ENCODE measurements at regions of chr10 and their contacts with region 1.

Region 1: DNA sequence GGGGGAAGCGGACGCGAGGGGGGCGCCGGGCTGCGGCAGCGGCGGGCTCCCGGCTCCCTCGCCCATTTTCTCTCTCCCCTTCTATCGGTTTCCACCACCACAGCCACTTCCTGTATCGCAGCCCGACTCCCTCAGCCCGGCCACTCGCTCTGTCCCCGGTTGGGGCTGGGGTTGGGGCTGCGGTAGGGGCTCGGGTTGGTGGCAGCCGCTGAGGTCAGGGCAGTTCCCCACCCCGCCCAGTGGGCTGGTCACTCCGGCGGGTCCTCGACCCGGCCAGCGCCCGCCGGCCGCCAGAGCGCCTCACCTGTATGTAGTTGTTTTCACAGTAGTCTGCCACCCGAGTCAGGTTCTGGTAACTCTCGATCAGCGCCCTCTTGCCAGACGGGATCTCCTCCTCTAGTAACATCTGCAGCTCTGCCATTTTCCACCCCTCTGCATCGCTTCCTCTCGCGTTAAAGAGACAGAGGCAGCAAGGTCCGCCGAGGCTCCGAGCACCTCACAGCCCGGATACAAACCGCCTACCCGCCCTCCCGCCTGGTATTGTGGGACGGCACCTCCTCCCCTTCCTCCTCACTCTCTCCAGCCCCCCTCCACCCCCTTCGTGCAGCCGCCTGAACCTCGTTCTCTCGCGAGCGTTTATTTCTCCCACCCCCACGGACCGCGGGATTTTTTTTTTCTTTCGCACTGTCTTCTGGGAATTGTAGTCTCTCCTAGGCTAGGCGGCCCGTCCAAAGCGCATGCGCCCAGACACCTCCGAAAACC is at the start of gene ABI1:
- DNase-seq: peak; percentile 99
- ATAC-seq: peak; percentile 95
- H3K4me3 Mint-ChIP-seq: peak within 1 kb of the TSS; percentile 98
- H3K27ac Mint-ChIP-seq: peak within 1 kb of the TSS; percentile 98
- H3K4me1 Mint-ChIP-seq: peaks cover 30% of the 10 kb centered on the region
- H3K27me3 Mint-ChIP-seq: no peaks in the 10 kb centered on the region
- total RNA-seq, gene ABI1: 44.2 to 56.6 TPM

Region 2: GRCh38 chr10:26437637-26438461 is 422.8 kb before region 1 on chr10 and contains the start of gene APBB1IP:
- CTCF ChIA-PET with region 1: interaction called, 4 read pairs
- POLR2A ChIA-PET with region 1: interaction called, 3 read pairs
- intact Hi-C with region 1: loop called in 1 of 2 experiments (anchors 2 kb)
- DNase-seq: peak; percentile 73
- ATAC-seq: peak; percentile 56
- H3K4me3 Mint-ChIP-seq: peak within 1 kb of the TSS; percentile 89
- H3K27ac Mint-ChIP-seq: peak within 1 kb of the TSS; percentile 97
- H3K4me1 Mint-ChIP-seq: peaks cover 49% of the 10 kb centered on the region
- H3K27me3 Mint-ChIP-seq: no peaks in the 10 kb centered on the region
- total RNA-seq, gene APBB1IP: 53.3 to 66.4 TPM

Region 3: GRCh38 chr10:26697163-26697921 is 163.3 kb before region 1 on chr10 and contains the start of gene PDSS1:
- CTCF ChIA-PET with region 1: interaction called, 3 read pairs
- POLR2A ChIA-PET with region 1: no interaction called
- intact Hi-C with region 1: loop called (anchors 1 kb)
- DNase-seq: peak; percentile 79
- ATAC-seq: peak; percentile 78
- H3K4me3 Mint-ChIP-seq: peak within 1 kb of the TSS; percentile 91
- H3K27ac Mint-ChIP-seq: peak within 1 kb of the TSS; percentile 95
- H3K4me1 Mint-ChIP-seq: peaks cover 32% of the 10 kb centered on the region
- H3K27me3 Mint-ChIP-seq: no peaks in the 10 kb centered on the region
- total RNA-seq, gene PDSS1: 16.1 to 20.7 TPM

Region 4: DNA sequence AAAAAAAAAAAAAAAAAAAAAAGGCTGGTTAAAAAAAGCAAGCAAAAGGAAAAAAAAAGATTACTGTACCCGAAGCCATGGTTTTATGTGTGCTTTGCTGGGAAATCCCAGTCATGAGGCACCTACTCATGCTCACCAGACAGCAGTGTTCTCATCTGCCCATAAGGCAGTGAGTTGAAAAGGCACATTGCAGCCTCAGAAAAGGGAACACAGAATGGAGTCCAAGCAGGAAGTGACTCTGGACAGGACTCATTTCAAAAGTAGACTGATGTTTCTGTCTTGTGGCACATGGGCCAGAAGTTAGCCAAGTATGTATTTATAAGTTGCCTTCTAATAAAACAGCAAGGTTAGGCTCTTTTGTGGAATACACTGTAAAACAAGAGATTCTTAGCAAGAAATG is 122.9 kb before region 1 on chr10:
- CTCF ChIA-PET with region 1: interaction called, 4 read pairs
- POLR2A ChIA-PET with region 1: interaction called, 3 read pairs
- intact Hi-C with region 1: loop called (anchors 1 kb)
- DNase-seq: peak; percentile 72
- ATAC-seq: peak; percentile 89
- H3K4me3 Mint-ChIP-seq: no peak overlapping the region
- H3K27ac Mint-ChIP-seq: peak overlapping the region; percentile 96
- H3K4me1 Mint-ChIP-seq: peaks cover 47% of the 10 kb centered on the region
- H3K27me3 Mint-ChIP-seq: no peaks in the 10 kb centered on the region

Region 5: GRCh38 chr10:26805567-26806245 is 54.9 kb before region 1 on chr10:
- CTCF ChIA-PET with region 1: no interaction called
- POLR2A ChIA-PET with region 1: no interaction called
- intact Hi-C with region 1: loop called (anchors 2 to 5 kb)
- DNase-seq: no peak
- ATAC-seq: peak; percentile 72
- H3K4me3 Mint-ChIP-seq: no peak overlapping the region
- H3K27ac Mint-ChIP-seq: no peak overlapping the region
- H3K4me1 Mint-ChIP-seq: peaks cover 78% of the 10 kb centered on the region
- H3K27me3 Mint-ChIP-seq: no peaks in the 10 kb centered on the region

Region 6: DNA sequence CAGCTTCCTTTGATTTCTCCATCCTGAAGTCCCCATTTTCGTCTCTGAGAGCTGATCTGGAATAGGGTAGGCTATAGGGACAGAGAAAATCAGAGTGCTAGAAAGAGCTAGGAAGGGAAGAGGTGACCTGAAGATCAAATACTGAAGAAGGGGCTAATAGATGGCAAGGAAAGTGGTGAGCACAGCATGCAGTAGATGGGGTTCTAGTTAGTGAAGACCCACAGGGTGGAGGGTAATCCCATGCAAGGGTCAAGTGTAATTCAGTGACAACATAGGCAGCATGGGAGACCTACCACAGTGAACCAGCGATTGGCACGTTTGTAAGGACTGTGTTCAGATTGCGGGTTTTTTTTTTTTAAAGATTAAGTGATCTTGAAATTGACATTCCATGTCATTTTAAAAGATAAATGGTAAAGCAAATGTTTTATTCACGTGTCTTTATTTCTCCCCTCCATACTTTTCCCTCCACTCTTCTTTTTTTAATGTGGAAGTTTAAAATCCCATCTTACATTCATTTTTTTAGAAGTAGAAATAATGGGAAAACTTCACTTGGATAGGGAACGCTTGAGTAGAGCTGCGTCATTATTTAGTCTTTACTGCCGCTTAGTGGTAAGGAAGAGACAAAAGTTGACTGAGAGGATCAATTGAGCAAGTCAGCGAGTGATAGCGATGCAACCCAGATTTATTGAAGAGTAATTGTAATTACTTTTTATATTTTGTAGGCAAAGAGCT is 21.1 kb after region 1 on chr10:
- CTCF ChIA-PET with region 1: interaction called, 13 read pairs
- POLR2A ChIA-PET with region 1: no interaction called
- intact Hi-C with region 1: loop called in 1 of 2 experiments (anchors 1 kb)
- DNase-seq: no peak
- ATAC-seq: peak; percentile 95
- H3K4me3 Mint-ChIP-seq: no peak overlapping the region
- H3K27ac Mint-ChIP-seq: no peak overlapping the region
- H3K4me1 Mint-ChIP-seq: no peaks in the 10 kb centered on the region
- H3K27me3 Mint-ChIP-seq: peaks cover 8% of the 10 kb centered on the region

Region 7: DNA sequence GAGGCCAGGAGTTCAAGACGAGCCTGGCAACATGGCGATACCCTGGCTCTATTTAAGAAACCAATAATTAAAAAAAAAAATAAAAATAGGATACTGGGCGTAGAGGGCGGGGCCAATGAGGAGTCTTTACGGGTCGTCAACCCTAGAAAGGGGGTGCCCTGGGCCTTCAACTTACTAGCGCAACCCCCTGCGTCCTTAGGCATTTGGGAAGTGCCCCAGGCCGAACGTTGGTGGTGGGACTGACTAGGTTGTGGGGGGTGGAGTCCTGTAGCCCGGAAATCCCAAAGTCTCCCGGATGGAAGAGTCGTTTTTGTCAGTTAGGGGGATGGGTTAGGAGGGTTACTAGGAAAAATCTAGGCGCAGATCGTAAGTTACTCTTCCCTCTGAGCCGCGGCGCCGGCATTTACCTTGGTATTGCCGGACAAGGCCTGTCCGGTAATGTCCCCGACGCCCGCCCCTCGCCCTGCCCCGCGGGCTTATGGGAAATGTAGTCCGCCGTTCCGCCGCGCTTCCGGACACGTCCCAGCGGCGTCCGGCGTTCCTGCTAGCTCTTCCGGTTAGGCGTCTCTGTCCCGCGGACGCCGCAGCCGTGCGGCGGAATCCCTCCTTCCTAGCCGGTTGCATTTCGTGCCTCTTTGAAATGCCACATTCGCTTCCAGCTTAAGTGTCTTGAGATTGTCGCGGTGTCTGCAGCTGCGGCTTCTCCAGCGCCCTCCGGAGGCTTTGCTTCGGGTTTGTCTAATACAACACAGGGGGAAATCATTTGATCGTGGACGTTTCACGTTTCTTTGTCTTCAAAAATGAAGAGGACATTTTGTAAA is 381.2 kb after region 1 on chr10:
- CTCF ChIA-PET with region 1: no interaction called
- POLR2A ChIA-PET with region 1: no interaction called
- intact Hi-C with region 1: loop called (anchors 1 kb)
- DNase-seq: peak; percentile 94
- ATAC-seq: peak; percentile 71
- H3K4me3 Mint-ChIP-seq: peak overlapping the region; percentile 98
- H3K27ac Mint-ChIP-seq: peak overlapping the region; percentile 100
- H3K4me1 Mint-ChIP-seq: peaks cover 28% of the 10 kb centered on the region
- H3K27me3 Mint-ChIP-seq: no peaks in the 10 kb centered on the region

Measured in activated CD4-positive, alpha-beta T cell treated with anti-CD3 and anti-CD28 coated beads for 36 hours (primary cell).